ENCODE measurements at regions of chr9 and their contacts with region 1.

Region 1: DNA sequence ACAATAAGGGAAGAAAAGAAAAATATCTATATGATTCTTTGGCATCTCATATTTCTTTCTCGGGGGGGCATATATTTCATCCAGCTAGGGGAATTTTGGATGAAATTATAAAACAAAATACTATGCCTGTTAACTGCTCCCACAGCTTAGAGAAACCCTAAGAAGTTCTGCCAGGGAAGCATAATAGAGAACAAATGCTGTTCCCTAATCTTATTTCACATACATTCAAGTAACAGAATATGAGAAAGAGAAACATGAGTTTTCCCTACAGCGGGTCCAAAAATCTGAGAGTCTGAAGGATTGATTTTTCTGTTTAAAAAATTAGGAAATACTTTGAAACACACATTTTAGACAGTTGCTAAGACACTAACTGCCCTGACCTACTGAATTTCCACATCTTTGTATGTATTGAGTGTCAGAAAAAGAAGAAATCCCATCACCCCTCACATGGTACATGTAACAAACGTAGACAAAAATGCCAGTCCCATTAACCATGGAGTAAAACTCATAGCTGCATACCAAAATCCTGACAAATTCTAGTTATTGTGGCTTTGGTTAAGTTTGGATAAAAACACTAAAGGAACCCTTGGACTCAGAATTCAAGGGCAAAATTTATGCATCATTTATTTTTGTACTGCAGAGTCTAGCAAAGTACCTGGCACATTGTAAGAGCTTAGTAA is 620.2 kb upstream of the DMAC1 start:
- DNase-seq: no peak
- H3K4me3 Mint-ChIP-seq: no peak overlapping the region
- H3K27ac Mint-ChIP-seq: no peak overlapping the region
- H3K4me1 Mint-ChIP-seq: no peaks in the 10 kb centered on the region
- H3K27me3 Mint-ChIP-seq: peaks cover 3% of the 10 kb centered on the region

Region 2: GRCh38 chr9:8895861-8896224 is 476.1 kb after region 1 on chr9:
- CTCF ChIA-PET with region 1: interaction called, 5 read pairs
- POLR2A ChIA-PET with region 1: no interaction called
- intact Hi-C with region 1: loop called (anchors 5 kb)
- DNase-seq: no peak
- H3K4me3 Mint-ChIP-seq: no peak overlapping the region
- H3K27ac Mint-ChIP-seq: no peak overlapping the region
- H3K4me1 Mint-ChIP-seq: no peaks in the 10 kb centered on the region
- H3K27me3 Mint-ChIP-seq: no peaks in the 10 kb centered on the region

Measured in activated CD4-positive, alpha-beta memory T cell treated with anti-CD3 and anti-CD28 coated beads for 36 hours (primary cell).